Activated naive CD4-positive, alpha-beta T cell treated with anti-CD3 and anti-CD28 coated beads for 36 hours (primary cell): ENCODE measurements at regions of chr13 and their contacts with region 1.

Region 1: DNA sequence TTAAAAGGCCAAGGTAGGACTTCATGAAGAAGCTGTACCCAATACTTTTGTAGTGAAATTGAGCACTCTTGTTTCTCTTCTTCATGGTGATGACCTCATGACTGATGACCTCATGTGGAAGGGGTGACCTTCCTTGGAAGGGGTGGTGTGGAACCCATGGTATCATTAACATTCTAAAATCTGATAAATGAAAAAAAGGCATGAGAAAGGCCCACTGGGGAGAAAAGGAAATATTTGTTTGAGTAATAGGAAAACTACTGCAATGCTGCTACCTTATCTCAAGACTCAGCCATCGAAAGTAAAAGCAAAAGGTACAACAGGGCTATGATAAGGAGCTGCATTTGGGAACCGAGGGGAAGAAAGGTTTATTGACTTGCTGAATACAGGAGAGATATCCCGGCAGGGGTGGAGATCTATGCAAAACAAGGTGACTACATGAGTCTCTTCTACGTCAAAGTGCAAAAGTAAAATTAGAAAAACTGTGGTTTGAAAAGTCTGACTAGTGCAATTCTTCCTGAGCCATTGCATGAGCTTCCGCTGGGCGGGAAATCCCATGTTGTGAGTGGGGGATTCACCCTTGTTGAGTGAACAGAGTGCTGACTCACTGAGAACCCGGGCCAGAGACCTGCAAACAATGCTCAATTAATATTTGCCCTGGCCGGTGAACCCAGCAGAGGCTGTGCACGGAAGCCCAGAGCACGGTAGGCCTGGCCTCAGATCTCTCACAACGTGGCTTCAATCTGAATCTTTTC is 138.9 kb upstream of the RFC3 start:
- DNase-seq: peak; percentile 90
- H3K4me3 Mint-ChIP-seq: peak overlapping the region; percentile 49
- H3K27ac Mint-ChIP-seq: peak overlapping the region; percentile 93
- H3K4me1 Mint-ChIP-seq: peaks cover 30% of the 10 kb centered on the region
- H3K27me3 Mint-ChIP-seq: peaks cover 3% of the 10 kb centered on the region

Region 2: GRCh38 chr13:33536601-33537000 is 142.5 kb before region 1 on chr13:
- CTCF ChIA-PET with region 1: no interaction called
- intact Hi-C with region 1: no loop called
- DNase-seq: no peak
- H3K4me3 Mint-ChIP-seq: no peak overlapping the region
- H3K27ac Mint-ChIP-seq: no peak overlapping the region
- H3K4me1 Mint-ChIP-seq: peaks cover 55% of the 10 kb centered on the region
- H3K27me3 Mint-ChIP-seq: no peaks in the 10 kb centered on the region

Region 3: DNA sequence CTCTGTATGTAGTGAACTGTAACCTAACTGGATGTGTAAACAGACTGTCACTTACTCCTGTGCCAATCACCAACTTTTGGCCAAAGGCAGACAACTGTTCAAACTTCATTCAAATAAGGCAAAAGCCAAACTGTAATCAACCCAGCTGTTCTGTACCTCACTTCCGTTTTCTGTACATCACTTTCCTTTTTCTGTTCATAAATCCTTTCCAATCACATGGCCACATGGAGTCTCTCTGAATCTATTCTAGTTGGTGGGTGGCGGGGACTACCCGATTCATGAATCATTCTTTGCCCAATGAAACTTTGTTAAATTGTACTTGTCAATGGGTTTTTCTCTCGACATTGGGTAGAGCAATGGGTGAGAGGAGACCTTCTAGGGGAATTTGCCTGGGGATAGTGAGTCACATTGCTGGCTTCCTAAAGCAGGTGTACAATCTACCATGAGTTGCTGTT is 39.4 kb before region 1 on chr13:
- CTCF ChIA-PET with region 1: no interaction called
- intact Hi-C with region 1: loop called (anchors 1 kb)
- DNase-seq: peak; percentile 81
- H3K4me3 Mint-ChIP-seq: no peak overlapping the region
- H3K27ac Mint-ChIP-seq: peak overlapping the region; percentile 80
- H3K4me1 Mint-ChIP-seq: peaks cover 41% of the 10 kb centered on the region
- H3K27me3 Mint-ChIP-seq: no peaks in the 10 kb centered on the region

Region 4: GRCh38 chr13:33696530-33696929 is 17.4 kb after region 1 on chr13:
- CTCF ChIA-PET with region 1: no interaction called
- intact Hi-C with region 1: loop called (anchors 1 kb)
- DNase-seq: no peak
- H3K4me3 Mint-ChIP-seq: no peak overlapping the region
- H3K27ac Mint-ChIP-seq: no peak overlapping the region
- H3K4me1 Mint-ChIP-seq: peaks cover 2% of the 10 kb centered on the region
- H3K27me3 Mint-ChIP-seq: peaks cover 3% of the 10 kb centered on the region